Esophagus muscularis mucosa (tissue), 4 donors: ENCODE measurements at regions of chr4 and their contacts with region 1.

Region 1: GRCh38 chr4:145609481-145610427 is 9.4 kb upstream of the MMAA start:
- DNase-seq: no peak
- H3K4me3 ChIP-seq: no peak overlapping the region
- H3K27ac ChIP-seq: no peak overlapping the region
- H3K4me1 ChIP-seq: no peaks in the 10 kb centered on the region
- H3K27me3 ChIP-seq: no peaks in the 10 kb centered on the region
- CTCF ChIP-seq: peak; percentile 61 to 77 (median 72)
- EP300 ChIP-seq: no peak
- POLR2A ChIP-seq: no peak

Region 2: DNA sequence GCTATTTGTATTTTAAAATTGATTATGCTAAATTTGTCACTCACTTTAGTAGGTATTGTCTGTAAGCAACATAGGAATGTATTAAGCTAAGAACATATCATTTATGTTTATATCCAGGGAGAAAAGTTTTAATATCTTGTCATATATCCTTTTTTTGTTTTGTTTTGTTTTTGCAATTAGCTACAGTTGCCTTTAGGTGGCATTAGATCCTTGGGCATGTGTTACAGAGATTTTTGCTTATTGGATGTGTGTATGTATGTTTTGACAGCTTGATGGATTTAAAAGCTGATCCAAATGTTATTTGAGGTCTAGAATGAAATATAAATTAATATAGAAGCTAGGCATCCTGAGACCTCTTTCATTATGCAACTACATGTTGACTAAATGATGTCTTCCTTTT is 393.2 kb before region 1 on chr4:
- intact Hi-C with region 1: loop called (anchors 5 kb)
- DNase-seq: no peak
- H3K4me3 ChIP-seq: no peak overlapping the region
- H3K27ac ChIP-seq: no peak overlapping the region
- H3K4me1 ChIP-seq: no peaks in the 10 kb centered on the region
- H3K27me3 ChIP-seq: no peaks in the 10 kb centered on the region
- CTCF ChIP-seq: peak; percentile 31 to 46 (median 37)
- EP300 ChIP-seq: no peak
- POLR2A ChIP-seq: no peak

Region 3: DNA sequence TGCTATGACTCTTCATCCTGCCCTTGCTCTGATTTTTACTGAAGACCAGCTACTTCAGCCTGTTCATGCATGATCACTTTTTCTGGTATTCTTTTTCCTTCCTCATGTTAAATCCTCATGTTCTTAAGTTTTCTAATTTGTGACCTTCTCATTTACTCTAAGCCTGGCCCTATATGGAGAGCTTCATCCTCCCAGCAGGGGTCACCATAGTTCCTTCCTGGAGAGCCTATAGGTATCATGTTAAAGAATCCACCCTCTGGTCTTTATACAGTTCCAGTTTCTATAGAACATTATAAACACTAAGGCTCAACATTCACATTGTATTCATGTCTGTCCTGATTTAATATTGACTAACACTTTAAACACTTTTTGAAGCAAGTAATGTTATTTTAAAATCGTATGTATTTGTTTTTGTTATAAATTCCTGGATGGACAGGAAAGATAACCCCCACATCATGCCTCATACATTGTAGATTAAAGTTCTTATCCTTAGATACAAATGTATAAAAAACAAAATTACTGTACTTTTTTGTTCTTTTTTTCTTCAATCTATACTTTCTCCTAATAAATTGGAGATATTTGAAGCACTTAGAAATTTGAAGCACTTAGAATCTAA is 375.6 kb before region 1 on chr4:
- intact Hi-C with region 1: loop called (anchors 5 kb)
- DNase-seq: no peak
- H3K4me3 ChIP-seq: no peak overlapping the region
- H3K27ac ChIP-seq: no peak overlapping the region
- H3K4me1 ChIP-seq: peaks cover 0 to 22% (median 7%) of the 10 kb centered on the region in 4 donors
- H3K27me3 ChIP-seq: no peaks in the 10 kb centered on the region
- CTCF ChIP-seq: peak; percentile 71 to 76 (median 75)
- EP300 ChIP-seq: no peak
- POLR2A ChIP-seq: no peak

Region 4: DNA sequence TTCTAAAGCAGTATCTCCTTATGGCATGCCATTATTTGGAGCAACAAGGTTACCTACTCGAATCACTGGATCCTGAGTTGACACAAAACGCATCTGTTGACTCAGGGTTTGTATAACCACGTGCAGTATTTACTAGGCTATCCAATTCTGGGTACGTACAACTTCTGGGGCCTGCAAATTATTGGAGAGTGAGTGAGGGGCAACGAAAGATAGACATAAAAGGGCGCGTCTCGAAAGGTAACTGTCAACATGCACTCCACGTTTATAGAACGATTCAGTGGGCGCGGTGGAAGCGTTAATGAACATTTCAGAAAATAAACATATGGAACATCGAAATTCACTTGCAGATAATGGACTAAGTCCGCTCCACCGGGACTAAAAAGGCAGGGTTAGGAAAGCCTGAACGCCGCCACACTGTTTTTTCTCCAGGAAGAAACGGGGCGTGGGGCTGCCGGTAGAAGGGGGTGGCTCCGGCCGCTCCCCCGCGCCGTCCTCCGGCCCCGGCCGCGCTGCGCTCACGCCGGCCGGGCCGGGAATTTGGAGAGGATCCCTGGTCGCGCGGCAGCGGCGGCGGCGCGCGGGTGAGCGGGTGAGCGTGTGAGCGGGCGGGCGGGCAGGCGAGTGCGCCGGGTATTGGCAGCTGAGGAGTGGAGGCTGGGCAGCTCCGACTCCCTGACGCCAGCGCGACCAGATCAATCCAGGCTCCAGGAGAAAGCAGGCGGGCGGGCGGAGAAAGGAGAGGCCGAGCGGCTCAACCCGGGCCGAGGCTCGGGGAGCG is 128.4 kb before region 1 on chr4 and contains the start of gene SMAD1:
- intact Hi-C with region 1: loop called (anchors 5 kb)
- DNase-seq: peak; percentile 93
- H3K4me3 ChIP-seq: peak within 1 kb of the TSS; percentile 76 to 99 (median 96)
- H3K27ac ChIP-seq: peak within 1 kb of the TSS; percentile 95 to 99 (median 96)
- H3K4me1 ChIP-seq: peaks cover 15 to 43% (median 40%) of the 10 kb centered on the region in 4 donors
- H3K27me3 ChIP-seq: no peaks in the 10 kb centered on the region
- CTCF ChIP-seq: no peak
- EP300 ChIP-seq: no peak
- POLR2A ChIP-seq: peak; percentile 62
- total RNA-seq, gene SMAD1: 19.5 to 34.3 (median 29.2) TPM

Region 5: DNA sequence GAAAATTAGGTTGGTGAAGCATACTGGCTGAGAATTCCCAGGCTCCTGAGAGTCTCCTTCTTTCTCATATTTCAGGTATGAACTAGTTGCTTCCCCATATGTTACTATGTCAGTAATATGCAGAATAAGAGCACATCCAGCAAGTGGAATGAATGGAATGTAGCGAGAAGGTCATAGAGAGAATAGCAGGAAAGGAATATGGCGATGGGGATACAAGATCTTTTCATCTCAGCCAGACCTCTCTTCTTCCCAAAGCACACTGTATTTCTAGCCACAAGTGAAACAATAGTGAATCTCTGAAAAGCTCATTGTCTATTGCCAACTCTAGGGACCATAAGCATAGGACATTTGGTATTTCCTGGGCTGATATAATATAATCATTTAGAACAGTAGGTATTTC is 45.2 kb before region 1 on chr4:
- intact Hi-C with region 1: loop called (anchors 5 kb)
- DNase-seq: no peak
- H3K4me3 ChIP-seq: no peak overlapping the region
- H3K27ac ChIP-seq: no peak overlapping the region
- H3K4me1 ChIP-seq: no peaks in the 10 kb centered on the region
- H3K27me3 ChIP-seq: no peaks in the 10 kb centered on the region
- CTCF ChIP-seq: no peak
- EP300 ChIP-seq: no peak
- POLR2A ChIP-seq: no peak